ENCODE measurements at regions of chr5 and their contacts with region 1.

Region 1: GRCh38 chr5:128213340-128213739 is 129.8 kb downstream of the SLC12A2 start:
- DNase-seq: no peak
- ATAC-seq: peak in 1 of 2 donors; percentile 25
- H3K4me3 ChIP-seq: no peak overlapping the region
- H3K27ac ChIP-seq: no peak overlapping the region
- H3K4me1 ChIP-seq: no peaks in the 10 kb centered on the region
- H3K27me3 ChIP-seq: no peaks in the 10 kb centered on the region
- CTCF ChIP-seq: peak; percentile 49 to 79 (median 69)
- POLR2A ChIP-seq: no peak

Region 2: DNA sequence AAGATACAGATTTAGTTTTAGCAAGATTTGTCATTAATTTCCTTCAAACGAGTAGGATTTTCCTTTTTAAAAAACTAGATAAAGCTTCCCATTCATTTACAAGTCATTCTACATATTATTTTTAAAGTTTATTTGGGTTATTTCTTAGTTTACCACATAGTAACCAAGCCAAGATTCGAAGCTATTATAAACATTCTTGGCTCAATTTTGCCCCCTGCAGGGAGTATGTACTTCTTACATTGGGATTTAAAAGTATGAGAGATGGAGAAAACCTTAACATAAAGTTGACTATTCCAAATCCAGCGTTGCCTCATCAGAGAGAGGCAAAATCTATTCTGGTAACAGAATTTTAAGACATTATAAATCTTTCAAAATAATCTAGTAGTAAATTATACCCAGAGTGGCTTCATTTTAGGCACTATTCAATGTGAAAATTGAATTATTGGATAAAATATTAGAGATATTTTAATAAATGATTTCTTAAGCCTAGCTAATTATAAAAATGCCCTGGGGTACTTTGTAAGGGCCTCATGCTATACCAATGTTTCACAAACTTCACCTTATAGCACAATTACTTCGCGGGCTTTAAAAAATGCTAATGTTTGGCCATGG is 285.6 kb after region 1 on chr5:
- in situ Hi-C with region 1: loop called in 3 of 4 experiments (anchors 5 kb)
- intact Hi-C with region 1: loop called (anchors 1 kb)
- DNase-seq: no peak
- ATAC-seq: no peak
- H3K4me3 ChIP-seq: no peak overlapping the region
- H3K27ac ChIP-seq: no peak overlapping the region
- H3K4me1 ChIP-seq: no peaks in the 10 kb centered on the region
- H3K27me3 ChIP-seq: no peaks in the 10 kb centered on the region
- CTCF ChIP-seq: peak; percentile 15 to 53 (median 43)
- POLR2A ChIP-seq: no peak

Region 3: GRCh38 chr5:128674825-128675446 is 461.6 kb after region 1 on chr5:
- in situ Hi-C with region 1: loop called in 1 of 4 experiments (anchors 10 kb)
- intact Hi-C with region 1: no loop called
- DNase-seq: no peak
- ATAC-seq: no peak
- H3K4me3 ChIP-seq: no peak overlapping the region
- H3K27ac ChIP-seq: no peak overlapping the region
- H3K4me1 ChIP-seq: no peaks in the 10 kb centered on the region
- H3K27me3 ChIP-seq: no peaks in the 10 kb centered on the region
- CTCF ChIP-seq: peak in 2 of 5 experiments; percentile 13 to 37
- POLR2A ChIP-seq: no peak

Region 4: GRCh38 chr5:128844354-128844923 is 631.1 kb after region 1 on chr5:
- in situ Hi-C with region 1: loop called in 3 of 4 experiments (anchors 25 kb)
- intact Hi-C with region 1: loop called (anchors 5 kb)
- DNase-seq: no peak
- ATAC-seq: no peak
- H3K4me3 ChIP-seq: no peak overlapping the region
- H3K27ac ChIP-seq: no peak overlapping the region
- H3K4me1 ChIP-seq: no peaks in the 10 kb centered on the region
- H3K27me3 ChIP-seq: no peaks in the 10 kb centered on the region
- CTCF ChIP-seq: peak in 1 of 5 experiments; percentile 30
- POLR2A ChIP-seq: no peak

Measured in gastrocnemius medialis (tissue), 4 donors.